ENCODE measurements at regions of chr12 and their contacts with region 1.

Region 1: DNA sequence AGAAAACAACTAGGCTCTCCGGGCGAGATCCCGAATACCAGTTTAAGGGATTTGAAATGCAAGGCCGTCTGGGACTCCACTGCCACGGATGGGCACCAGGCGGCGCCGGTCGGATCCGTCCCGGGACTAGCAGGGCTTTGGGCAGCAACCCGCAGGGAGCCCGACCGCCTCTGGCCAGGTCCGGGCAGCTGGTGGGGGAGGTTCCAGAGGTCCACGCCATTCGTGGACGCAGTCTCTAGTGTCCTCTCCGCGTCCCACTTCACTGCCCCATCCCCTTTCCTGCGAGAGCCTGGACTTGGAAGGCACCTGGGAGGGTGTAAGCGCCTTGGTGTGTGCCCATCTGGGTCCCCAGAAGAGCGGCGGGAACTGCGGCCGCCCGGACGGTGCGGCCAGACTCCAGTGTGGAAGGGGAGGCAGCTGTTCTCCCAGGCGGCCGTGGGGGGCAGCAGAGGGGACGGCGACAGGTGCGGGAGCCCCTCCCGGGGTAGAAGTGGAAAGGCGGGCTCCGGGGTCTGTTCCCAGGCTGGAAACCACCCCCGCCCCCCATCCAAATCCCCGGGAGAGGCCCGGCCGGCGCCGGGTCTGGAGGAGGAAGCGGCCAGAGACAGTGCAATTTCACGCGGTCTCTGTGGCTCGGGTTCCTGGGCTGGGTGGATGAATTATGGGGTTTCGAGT is 838 bp upstream of the ERBB3 start:
- DNase-seq: peak; percentile 93
- H3K4me3 ChIP-seq: peak overlapping the region; percentile 37 to 58 (median 46)
- H3K27ac ChIP-seq: peak overlapping the region; percentile 59 to 79 (median 76)
- H3K4me1 ChIP-seq: peaks cover 0 to 22% (median 18%) of the 10 kb centered on the region in 4 donors
- H3K27me3 ChIP-seq: peaks cover 0 to 14% (median 3%) of the 10 kb centered on the region in 3 donors
- CTCF ChIP-seq: peak; percentile 57 to 81 (median 76)
- EP300 ChIP-seq: no peak
- POLR2A ChIP-seq: no peak

Region 2: GRCh38 chr12:56041552-56042429 is 37.3 kb before region 1 on chr12 and contains the start of gene RPS26:
- intact Hi-C with region 1: loop called (anchors 5 kb)
- DNase-seq: peak; percentile 98
- H3K4me3 ChIP-seq: peak within 1 kb of the TSS; percentile 56 to 94 (median 72)
- H3K27ac ChIP-seq: peak within 1 kb of the TSS; percentile 91 to 96 (median 94)
- H3K4me1 ChIP-seq: peaks cover 0 to 20% (median 19%) of the 10 kb centered on the region in 4 donors
- H3K27me3 ChIP-seq: no peaks in the 10 kb centered on the region
- CTCF ChIP-seq: peak in 1 of 4 experiments; percentile 40
- EP300 ChIP-seq: peak in 2 of 4 donors; percentile 32 to 52
- POLR2A ChIP-seq: peak; percentile 97
- total RNA-seq, gene RPS26: 130 to 3,746 (median 1,580) TPM

Region 3: GRCh38 chr12:56150563-56150962 is 71.4 kb after region 1 on chr12:
- intact Hi-C with region 1: no loop called
- DNase-seq: no peak
- H3K4me3 ChIP-seq: no peak overlapping the region
- H3K27ac ChIP-seq: no peak overlapping the region
- H3K4me1 ChIP-seq: peaks cover 0 to 27% (median 18%) of the 10 kb centered on the region in 4 donors
- H3K27me3 ChIP-seq: no peaks in the 10 kb centered on the region
- CTCF ChIP-seq: no peak
- EP300 ChIP-seq: no peak
- POLR2A ChIP-seq: no peak

Region 4: DNA sequence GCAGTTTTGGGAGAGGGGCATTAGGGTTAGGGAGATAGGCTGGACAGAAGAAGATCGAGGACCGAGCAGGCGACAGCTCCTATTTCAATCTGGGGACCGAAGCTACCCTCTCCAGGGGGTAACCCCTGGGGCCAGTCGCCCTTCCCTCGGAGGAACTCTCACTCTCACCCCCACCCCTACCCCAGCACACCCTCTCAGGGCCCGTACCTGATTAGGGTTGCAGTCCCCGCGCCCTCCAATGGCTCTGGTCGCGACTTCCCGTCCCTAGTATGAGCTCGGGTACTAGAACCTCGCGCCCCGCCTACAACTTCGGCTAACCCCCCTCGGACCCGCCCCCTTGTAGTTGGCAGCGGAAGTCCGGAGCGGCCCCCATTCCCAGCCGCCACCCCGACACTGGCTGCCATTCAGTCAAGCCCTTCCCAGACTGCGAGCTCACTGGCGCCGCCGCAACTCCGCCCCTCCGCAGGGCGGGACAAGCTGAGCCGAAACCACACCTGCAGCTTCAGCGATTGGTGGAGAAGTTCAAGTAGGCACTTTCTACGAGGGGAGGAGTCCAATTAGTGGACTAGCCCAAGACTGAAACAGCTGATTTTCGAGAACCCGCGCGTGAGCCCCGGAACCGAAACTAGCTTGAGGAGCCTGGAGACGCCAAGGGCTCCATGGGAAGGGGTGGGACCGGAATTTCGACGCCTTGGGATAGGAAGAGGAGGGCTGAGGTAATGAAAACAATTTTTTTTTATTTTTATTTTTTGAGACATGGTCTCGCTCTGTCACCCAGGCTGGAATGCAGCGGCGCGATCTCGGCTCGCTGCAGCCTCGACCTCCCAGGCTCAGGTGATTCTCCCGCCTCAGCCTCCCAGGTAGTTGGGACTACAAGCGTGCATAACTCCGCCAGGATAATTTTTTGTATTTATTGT is 281.0 kb after region 1 on chr12 and contains the start of gene STAT2:
- intact Hi-C with region 1: no loop called
- DNase-seq: peak; percentile 99
- H3K4me3 ChIP-seq: peak within 1 kb of the TSS; percentile 64 to 91 (median 78)
- H3K27ac ChIP-seq: peak within 1 kb of the TSS; percentile 88 to 92 (median 90)
- H3K4me1 ChIP-seq: peaks cover 0 to 23% (median 18%) of the 10 kb centered on the region in 4 donors
- H3K27me3 ChIP-seq: no peaks in the 10 kb centered on the region
- CTCF ChIP-seq: peak in 1 of 4 experiments; percentile 13
- EP300 ChIP-seq: peak in 2 of 4 donors; percentile 23 to 57
- POLR2A ChIP-seq: peak; percentile 61 to 82
- total RNA-seq, gene STAT2: 73.6 to 160 (median 94.6) TPM